Endothelial cell of umbilical vein (primary cell): ENCODE measurements at regions of chr18 and their contacts with region 1.

Region 1: DNA sequence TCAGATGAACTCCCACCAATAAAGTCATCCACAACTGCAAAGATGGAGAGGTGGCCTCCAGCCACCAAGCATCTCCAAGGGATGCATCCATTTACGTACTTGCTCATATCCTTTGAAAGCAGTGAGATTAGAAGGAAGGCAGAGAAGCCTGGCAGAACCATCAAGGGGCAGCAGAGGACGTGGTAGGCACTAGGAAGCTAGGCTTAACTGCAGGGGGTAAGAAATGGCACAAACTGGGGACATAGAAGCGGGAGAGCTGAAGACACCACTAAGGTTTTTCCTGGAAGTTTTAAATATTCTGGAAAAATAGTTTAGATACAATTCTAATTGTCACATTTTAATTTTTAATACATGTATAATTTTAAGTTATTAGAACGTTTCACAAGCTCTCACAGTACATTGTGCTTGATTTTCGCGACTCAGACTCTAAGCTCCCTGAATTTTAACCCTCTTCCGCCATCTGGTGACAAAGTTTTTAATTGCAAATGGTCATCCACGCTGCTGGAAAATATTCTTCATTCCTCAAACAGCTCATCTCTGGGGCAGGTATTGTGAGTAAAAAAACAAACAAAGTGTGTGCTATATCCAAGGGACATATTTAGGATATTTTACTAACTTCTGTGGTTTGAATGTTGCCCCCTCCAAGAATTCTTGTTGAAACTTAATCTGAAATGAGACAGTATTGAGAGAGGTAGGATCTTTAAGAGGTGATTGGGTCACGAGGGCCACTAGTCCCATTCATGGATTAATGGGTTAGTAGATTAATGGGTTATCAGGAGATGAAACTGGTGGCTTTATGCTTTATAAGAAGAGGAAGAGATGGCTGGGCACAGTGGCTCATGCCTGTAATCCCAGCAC is 1.6 kb upstream of the PSTPIP2 start:
- DNase-seq: peak; percentile 75
- H3K4me3 ChIP-seq: no peak overlapping the region
- H3K27ac ChIP-seq: no peak overlapping the region
- H3K4me1 ChIP-seq: peaks cover 9% of the 10 kb centered on the region
- H3K27me3 ChIP-seq: no peaks in the 10 kb centered on the region
- CTCF ChIP-seq: peak; percentile 37 to 48
- POLR2A ChIP-seq: no peak

Region 2: GRCh38 chr18:45621061-45621511 is 452.6 kb before region 1 on chr18:
- CTCF ChIA-PET with region 1: interaction called, 16 read pairs
- POLR2A ChIA-PET with region 1: no interaction called
- dilution Hi-C with region 1: no loop called
- intact Hi-C with region 1: no loop called
- DNase-seq: peak; percentile 41
- H3K4me3 ChIP-seq: no peak overlapping the region
- H3K27ac ChIP-seq: no peak overlapping the region
- H3K4me1 ChIP-seq: no peaks in the 10 kb centered on the region
- H3K27me3 ChIP-seq: peaks cover 2% of the 10 kb centered on the region in 2 experiments
- CTCF ChIP-seq: peak; percentile 81 to 89
- POLR2A ChIP-seq: no peak

Region 3: DNA sequence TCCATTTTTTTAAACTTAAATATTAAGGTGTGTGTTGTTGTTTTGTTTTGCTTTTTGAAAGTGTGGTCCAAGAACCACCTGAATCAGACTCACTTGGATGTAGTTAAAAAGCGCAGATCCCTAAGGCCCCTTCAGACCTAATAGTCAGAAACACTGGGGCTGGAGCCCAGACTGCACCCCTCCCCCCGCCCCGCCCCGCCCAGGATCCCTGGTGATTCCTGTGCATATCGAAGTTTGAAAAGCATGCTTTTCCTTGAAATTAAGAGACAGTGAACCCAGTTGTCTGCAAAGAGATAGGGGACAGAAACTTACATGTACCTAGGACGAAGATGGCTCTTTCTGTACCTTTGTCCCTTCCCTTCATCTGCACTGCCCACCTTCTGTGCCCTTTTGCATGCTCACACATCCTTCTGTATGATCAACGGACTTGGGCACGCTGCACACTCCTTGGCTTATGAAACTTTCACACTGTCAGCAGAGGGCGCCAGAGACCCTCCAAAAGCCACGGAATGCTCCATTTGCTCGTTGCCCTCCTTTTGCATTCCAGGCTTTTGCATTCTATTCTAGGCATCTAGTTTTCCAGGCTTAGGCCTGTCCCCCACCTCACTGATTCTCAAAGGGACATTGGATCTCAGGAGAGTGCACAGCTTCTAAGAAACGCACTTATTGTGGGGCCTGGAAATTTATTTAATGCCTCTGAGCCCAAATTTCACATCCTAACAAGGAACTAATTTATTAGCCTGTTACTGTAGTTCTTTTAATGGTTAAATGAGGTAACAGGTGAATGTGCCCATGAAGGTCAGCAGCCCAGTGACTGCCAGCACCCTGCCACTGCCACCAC is 382.5 kb before region 1 on chr18:
- CTCF ChIA-PET with region 1: interaction called, 9 read pairs
- POLR2A ChIA-PET with region 1: no interaction called
- dilution Hi-C with region 1: no loop called
- intact Hi-C with region 1: loop called (anchors 1 kb)
- DNase-seq: peak; percentile 71
- H3K4me3 ChIP-seq: no peak overlapping the region
- H3K27ac ChIP-seq: no peak overlapping the region
- H3K4me1 ChIP-seq: no peaks in the 10 kb centered on the region
- H3K27me3 ChIP-seq: peaks cover 4% of the 10 kb centered on the region in 2 experiments
- CTCF ChIP-seq: peak; percentile 71 to 85
- POLR2A ChIP-seq: no peak

Region 4: DNA sequence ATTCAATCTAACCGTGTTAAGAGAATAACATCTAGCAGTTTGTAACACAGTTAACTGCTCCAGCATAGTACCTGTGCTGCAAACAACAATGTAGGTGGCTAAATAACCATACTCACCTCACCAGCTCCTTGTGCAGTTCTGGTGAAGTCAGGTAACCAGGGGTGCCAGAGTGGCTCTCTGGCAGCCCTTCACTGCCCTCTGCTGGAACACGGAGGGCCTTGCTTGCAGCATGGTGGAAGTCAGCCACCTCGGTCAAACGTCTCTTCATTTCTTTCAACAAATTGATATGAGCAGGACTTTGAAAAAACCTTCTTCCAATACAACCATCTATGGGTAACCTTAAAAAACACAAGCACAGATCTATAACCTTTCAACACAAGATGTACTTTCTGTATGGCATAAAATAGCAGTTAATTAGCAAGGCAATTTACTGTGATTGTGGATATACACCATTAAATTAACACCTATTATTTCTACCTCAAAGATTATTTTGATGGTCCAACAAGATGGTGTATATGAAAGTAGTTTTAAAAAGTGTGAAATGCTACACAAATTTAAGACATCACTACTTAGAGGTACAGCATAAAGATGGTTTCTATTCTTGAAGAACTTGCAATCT is 163.2 kb before region 1 on chr18:
- CTCF ChIA-PET with region 1: interaction called, 14 read pairs
- POLR2A ChIA-PET with region 1: no interaction called
- dilution Hi-C with region 1: no loop called
- intact Hi-C with region 1: no loop called
- DNase-seq: peak; percentile 61
- H3K4me3 ChIP-seq: no peak overlapping the region
- H3K27ac ChIP-seq: no peak overlapping the region
- H3K4me1 ChIP-seq: no peaks in the 10 kb centered on the region
- H3K27me3 ChIP-seq: no peaks in the 10 kb centered on the region
- CTCF ChIP-seq: peak; percentile 77 to 87
- POLR2A ChIP-seq: no peak

Region 5: GRCh38 chr18:45951016-45951714 is 122.5 kb before region 1 on chr18:
- CTCF ChIA-PET with region 1: interaction called, 18 read pairs
- POLR2A ChIA-PET with region 1: no interaction called
- dilution Hi-C with region 1: no loop called
- intact Hi-C with region 1: no loop called
- DNase-seq: peak; percentile 24
- H3K4me3 ChIP-seq: no peak overlapping the region
- H3K27ac ChIP-seq: peak overlapping the region; percentile 35
- H3K4me1 ChIP-seq: peaks cover 11% of the 10 kb centered on the region
- H3K27me3 ChIP-seq: no peaks in the 10 kb centered on the region
- CTCF ChIP-seq: no peak
- POLR2A ChIP-seq: no peak

Region 6: GRCh38 chr18:45981821-45982220 is 91.9 kb before region 1 on chr18:
- CTCF ChIA-PET with region 1: interaction called, 49 read pairs
- POLR2A ChIA-PET with region 1: no interaction called
- dilution Hi-C with region 1: no loop called
- intact Hi-C with region 1: no loop called
- DNase-seq: no peak
- H3K4me3 ChIP-seq: no peak overlapping the region
- H3K27ac ChIP-seq: no peak overlapping the region
- H3K4me1 ChIP-seq: peaks cover 7% of the 10 kb centered on the region
- H3K27me3 ChIP-seq: no peaks in the 10 kb centered on the region
- CTCF ChIP-seq: no peak
- POLR2A ChIP-seq: no peak

Region 7: GRCh38 chr18:46084431-46084830 is 10.7 kb after region 1 on chr18:
- CTCF ChIA-PET with region 1: interaction called, 16 read pairs
- POLR2A ChIA-PET with region 1: no interaction called
- dilution Hi-C with region 1: no loop called
- intact Hi-C with region 1: no loop called
- DNase-seq: no peak
- H3K4me3 ChIP-seq: no peak overlapping the region
- H3K27ac ChIP-seq: no peak overlapping the region
- H3K4me1 ChIP-seq: no peaks in the 10 kb centered on the region
- H3K27me3 ChIP-seq: no peaks in the 10 kb centered on the region
- CTCF ChIP-seq: no peak
- POLR2A ChIP-seq: no peak

Region 8: GRCh38 chr18:46160050-46160798 is 86.5 kb after region 1 on chr18:
- CTCF ChIA-PET with region 1: no interaction called
- POLR2A ChIA-PET with region 1: no interaction called
- dilution Hi-C with region 1: no loop called
- intact Hi-C with region 1: no loop called
- DNase-seq: no peak
- H3K4me3 ChIP-seq: no peak overlapping the region
- H3K27ac ChIP-seq: no peak overlapping the region
- H3K4me1 ChIP-seq: no peaks in the 10 kb centered on the region
- H3K27me3 ChIP-seq: no peaks in the 10 kb centered on the region
- CTCF ChIP-seq: no peak
- POLR2A ChIP-seq: no peak

Region 9: DNA sequence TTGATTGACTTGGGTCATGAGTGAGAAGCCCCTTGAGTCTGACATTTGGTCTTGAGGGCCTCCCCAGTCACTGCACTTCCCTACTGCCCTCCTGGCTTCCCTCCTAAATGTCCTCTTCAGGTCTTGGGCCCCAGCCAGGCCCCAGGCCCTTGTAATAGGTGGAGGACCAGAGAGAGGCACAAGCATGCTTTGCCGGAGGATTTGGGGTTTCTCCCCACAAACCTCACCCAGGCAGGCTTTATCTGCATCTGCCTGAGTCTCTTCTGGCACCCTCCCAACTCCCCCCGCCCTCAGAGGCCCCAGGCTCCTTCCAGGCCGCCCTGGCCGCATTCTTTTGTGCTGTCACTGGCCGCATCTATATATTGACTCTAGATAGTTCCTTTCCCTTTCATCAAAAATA is 301.2 kb after region 1 on chr18:
- CTCF ChIA-PET with region 1: no interaction called
- POLR2A ChIA-PET with region 1: no interaction called
- dilution Hi-C with region 1: no loop called
- intact Hi-C with region 1: no loop called
- DNase-seq: no peak
- H3K4me3 ChIP-seq: no peak overlapping the region
- H3K27ac ChIP-seq: no peak overlapping the region
- H3K4me1 ChIP-seq: no peaks in the 10 kb centered on the region
- H3K27me3 ChIP-seq: no peaks in the 10 kb centered on the region
- CTCF ChIP-seq: no peak
- POLR2A ChIP-seq: no peak